Posterior vena cava (tissue), 2 donors: ENCODE measurements at regions of chr18 and their contacts with region 1.

Region 1: DNA sequence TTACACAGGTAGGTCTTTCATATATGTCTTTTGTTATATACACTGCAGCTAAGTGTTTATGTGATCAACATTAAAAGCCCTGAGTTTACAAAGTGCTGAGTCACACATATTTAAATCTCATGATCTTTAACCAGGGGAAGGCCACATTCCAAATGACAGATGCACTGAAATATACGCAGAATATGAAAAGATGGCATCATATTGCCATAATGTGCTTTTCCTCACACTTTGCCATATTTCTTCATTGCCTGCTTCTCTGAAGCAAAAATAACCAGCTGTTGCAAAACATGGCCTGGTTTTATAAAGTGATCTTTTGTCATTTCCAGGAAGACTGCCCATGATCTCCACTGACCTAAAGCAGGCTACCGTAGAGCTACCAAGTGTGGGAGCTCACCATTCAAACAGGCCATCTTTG is 93.5 kb upstream of the MAPRE2 start:
- DNase-seq: no peak

Region 2: DNA sequence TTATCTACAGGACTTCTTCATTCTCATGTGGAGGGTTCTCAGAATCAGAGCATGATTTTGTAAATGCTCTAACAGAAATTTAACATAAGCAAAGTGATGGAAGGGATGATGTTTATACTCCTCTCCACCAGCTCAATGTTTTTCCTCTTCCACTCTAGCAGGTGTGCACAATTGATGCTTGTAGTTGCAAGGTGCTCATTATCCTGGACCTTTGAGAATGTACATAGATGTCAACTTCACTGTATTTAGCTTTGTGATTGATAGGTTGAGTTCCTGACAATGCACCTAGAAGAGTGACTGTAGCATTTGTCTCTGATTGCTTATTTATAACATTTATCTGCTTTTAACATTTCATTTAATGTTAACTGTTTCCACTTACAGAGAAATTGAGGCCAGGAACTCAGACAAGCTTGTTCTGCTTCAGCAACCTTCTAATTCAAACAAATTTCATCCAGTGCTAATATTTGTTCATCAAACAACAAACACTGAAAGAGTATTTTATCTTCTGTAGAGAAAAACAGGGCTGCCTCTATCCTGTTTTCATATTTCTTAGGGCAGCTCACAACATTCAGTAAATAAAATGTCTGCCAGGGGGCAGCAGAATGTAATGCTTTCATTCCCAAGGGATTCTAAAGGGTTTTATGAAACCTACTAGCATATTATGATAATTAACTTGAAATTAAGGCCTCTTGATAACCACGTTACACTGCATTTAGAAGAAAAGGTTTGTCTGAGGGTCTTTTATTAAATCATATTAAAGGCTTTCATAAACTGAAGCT is 595.1 kb before region 1 on chr18:
- intact Hi-C with region 1: loop called in 1 of 2 experiments (anchors 10 kb)
- DNase-seq: no peak

Region 3: DNA sequence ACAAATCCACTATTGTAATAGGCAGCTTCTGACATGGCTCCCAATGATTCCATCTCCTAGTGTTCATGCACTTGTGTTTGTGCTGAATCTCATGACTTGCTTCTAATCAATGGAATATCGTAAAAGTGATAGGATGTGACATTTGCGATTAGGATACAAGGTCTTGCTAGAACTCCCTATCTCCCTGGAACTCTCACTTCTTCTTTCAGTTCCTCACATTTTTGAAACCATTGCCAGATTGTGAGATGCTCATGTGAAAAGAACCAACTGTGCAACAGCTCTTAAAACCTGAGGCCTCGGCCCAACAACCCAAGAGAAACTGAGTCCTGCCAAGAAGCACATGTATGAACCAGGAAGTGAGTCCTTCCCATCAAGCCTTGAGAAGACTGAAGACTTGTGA is 464.5 kb before region 1 on chr18:
- intact Hi-C with region 1: no loop called
- DNase-seq: no peak

Region 4: DNA sequence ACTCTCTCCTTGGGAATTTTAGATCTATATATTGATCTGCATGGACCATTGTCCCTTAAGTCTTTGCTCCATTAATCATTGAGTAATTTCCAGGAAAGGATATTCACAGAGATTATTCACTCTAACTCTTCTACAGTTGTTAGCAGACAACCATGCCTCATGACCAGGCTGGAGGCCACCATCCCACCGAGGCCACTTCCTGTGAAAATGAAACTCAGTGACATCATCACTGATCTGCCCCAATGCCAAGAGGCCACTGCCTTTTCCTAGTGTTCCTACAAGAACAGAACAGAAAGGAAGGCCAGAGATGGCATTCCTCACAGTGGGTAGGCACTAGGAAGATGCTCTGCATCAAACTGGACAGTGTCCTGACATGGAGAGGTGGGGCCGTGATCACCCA is 76.3 kb before region 1 on chr18:
- intact Hi-C with region 1: no loop called
- DNase-seq: no peak